ENCODE measurements at regions of chr16 and their contacts with region 1.

Region 1: GRCh38 chr16:50152807-50153452 is at the start of gene TENT4B:
- DNase-seq: peak; percentile 86
- ATAC-seq: peak; percentile 79
- H3K4me3 Mint-ChIP-seq: peak within 1 kb of the TSS; percentile 83
- H3K27ac Mint-ChIP-seq: peak within 1 kb of the TSS; percentile 98
- H3K4me1 Mint-ChIP-seq: peaks cover 32% of the 10 kb centered on the region
- H3K27me3 Mint-ChIP-seq: no peaks in the 10 kb centered on the region
- CTCF ChIP-seq: no peak
- total RNA-seq, gene TENT4B: 19.0 to 19.2 TPM

Region 2: DNA sequence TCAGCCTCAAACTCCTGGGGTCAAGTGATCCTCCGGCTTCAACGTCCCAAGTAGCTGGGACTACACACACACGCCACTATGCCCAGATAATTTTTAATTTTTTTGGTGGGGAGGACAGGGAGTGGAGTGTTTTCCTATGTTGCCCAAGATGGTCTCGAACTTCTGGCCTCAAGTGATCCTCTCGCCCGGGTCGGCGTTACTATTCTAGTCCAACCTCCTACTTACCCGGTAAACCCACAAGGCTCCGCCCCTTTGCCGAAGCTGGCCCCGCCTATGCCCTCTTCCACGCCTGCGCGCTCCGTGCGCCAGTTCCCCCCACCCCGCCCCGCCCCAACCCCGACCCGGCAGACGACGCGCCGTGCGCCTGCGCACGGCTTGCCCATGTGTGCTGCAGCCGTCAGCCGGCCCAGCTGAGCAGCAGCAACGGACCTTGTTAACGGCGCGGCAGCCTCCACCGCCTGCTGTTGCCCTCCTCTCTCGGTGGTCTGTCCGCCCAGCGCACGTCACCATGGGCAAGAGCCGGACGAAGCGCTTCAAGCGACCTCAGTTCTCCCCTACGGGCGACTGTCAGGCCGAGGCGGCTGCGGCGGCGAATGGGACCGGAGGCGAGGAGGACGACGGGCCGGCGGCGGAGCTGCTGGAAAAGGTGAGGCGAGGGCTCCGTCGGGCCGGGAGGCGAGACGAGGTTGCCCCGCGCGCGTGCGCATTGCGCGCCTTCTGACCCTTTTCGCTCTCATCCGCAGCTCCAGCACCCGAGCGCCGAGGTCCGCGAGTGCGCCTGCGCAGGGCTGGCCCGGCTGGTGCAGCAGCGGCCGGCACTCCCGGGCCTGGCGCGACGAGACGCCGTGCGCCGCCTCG is 87.1 kb before region 1 on chr16 and contains the start of gene HEATR3:
- CTCF ChIA-PET with region 1: interaction called, 12 read pairs
- POLR2A ChIA-PET with region 1: interaction called, 6 read pairs
- intact Hi-C with region 1: loop called (anchors 10 kb)
- DNase-seq: peak; percentile 95
- ATAC-seq: peak; percentile 84
- H3K4me3 Mint-ChIP-seq: peak within 1 kb of the TSS; percentile 84
- H3K27ac Mint-ChIP-seq: peak within 1 kb of the TSS; percentile 91
- H3K4me1 Mint-ChIP-seq: peaks cover 32% of the 10 kb centered on the region
- H3K27me3 Mint-ChIP-seq: no peaks in the 10 kb centered on the region
- CTCF ChIP-seq: no peak
- total RNA-seq, gene HEATR3: 23.6 to 29.6 TPM

Region 3: GRCh38 chr16:50166511-50167500 is 13.9 kb after region 1 on chr16:
- CTCF ChIA-PET with region 1: interaction called, 12 read pairs
- POLR2A ChIA-PET with region 1: interaction called, 5 read pairs
- intact Hi-C with region 1: no loop called
- DNase-seq: peak; percentile 56
- ATAC-seq: peak; percentile 82
- H3K4me3 Mint-ChIP-seq: peak overlapping the region; percentile 62
- H3K27ac Mint-ChIP-seq: peak overlapping the region; percentile 78
- H3K4me1 Mint-ChIP-seq: peaks cover 55% of the 10 kb centered on the region
- H3K27me3 Mint-ChIP-seq: no peaks in the 10 kb centered on the region
- CTCF ChIP-seq: no peak

Region 4: DNA sequence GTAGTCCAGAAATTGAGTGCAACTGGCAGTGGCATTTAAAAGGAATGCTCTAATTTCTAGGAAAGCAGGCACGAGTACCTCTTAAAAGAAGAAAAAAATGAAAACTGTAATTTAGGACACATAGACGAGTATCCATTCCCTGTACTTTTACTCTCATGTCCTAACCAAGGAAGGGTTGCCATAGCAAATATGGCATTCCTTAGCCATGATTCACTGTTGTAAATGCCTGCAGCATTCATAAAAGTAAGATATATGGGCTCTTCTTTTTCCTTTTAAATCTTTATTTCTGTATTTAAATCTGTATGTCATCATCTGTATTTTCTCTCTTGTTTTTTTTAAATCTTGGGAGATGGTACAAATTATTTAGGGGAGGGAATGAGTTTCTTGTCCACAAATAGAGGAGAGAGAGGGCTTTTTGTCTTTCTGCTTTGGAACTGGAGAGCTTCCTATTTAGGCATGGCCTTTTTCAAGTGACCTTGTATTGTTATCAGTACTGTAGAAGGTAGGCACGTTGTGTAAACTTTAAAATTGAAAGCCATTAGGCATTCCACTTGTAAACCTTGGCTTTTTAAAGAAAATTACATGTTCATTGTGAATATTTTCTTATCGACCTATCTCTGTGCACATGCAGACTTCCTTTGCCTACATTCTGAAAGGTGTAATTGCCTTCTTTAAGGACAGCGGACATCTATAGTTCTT is 50.1 kb after region 1 on chr16:
- CTCF ChIA-PET with region 1: no interaction called
- POLR2A ChIA-PET with region 1: interaction called, 3 read pairs
- intact Hi-C with region 1: loop called (anchors 10 kb)
- DNase-seq: no peak
- ATAC-seq: no peak
- H3K4me3 Mint-ChIP-seq: no peak overlapping the region
- H3K27ac Mint-ChIP-seq: peak overlapping the region; percentile 18
- H3K4me1 Mint-ChIP-seq: peaks cover 59% of the 10 kb centered on the region
- H3K27me3 Mint-ChIP-seq: no peaks in the 10 kb centered on the region
- CTCF ChIP-seq: no peak